Dendritic cell treated with granulocyte-macrophage colony-stimulating factor and Interleukin-4, amounts not matched to agents 40 ng/mL and 50 ng/mL, for 4 days (primary cell): ENCODE measurements at regions of chr1 and their contacts with region 1.

Region 1: DNA sequence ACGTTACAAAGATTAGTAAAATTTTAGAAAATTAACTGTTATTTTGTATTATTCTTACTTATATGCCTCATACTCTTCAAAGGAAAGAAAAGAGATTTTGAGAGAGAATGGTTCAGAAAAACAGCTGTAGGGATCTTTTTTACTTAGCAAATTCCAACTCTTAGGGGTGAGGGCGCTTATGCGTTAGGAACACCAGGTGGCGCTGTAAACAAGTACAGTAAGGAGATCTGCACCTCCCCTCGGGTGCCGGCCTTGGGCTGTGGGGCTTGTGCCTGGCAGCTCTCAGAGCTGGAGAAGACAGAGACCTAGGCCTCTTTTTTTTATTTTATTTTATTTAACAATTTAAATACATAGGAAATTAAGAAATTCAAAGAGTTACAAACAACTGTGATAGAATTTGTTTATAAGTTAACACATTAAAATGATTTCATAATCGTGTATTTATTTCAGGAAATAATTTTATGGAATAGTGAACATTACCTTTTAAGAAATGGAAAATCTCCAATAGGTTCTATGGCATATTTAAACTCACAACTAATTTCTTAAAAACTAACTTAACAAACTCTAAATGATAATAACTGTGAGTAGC is 32.6 kb downstream of the UTP25 start:
- H3K4me3 Mint-ChIP-seq: no peak overlapping the region
- H3K27ac Mint-ChIP-seq: no peak overlapping the region
- H3K4me1 Mint-ChIP-seq: peaks cover under 1% of the 10 kb centered on the region
- H3K27me3 Mint-ChIP-seq: peaks cover 11% of the 10 kb centered on the region

Region 2: GRCh38 chr1:209747580-209748262 is 112.7 kb before region 1 on chr1:
- intact Hi-C with region 1: no loop called
- H3K4me3 Mint-ChIP-seq: peak overlapping the region; percentile 80
- H3K27ac Mint-ChIP-seq: peak overlapping the region; percentile 77
- H3K4me1 Mint-ChIP-seq: peaks cover 73% of the 10 kb centered on the region
- H3K27me3 Mint-ChIP-seq: no peaks in the 10 kb centered on the region

Region 3: GRCh38 chr1:209784265-209785169 is 75.9 kb before region 1 on chr1 and contains the start of gene C1orf74:
- intact Hi-C with region 1: no loop called
- H3K4me3 Mint-ChIP-seq: peak within 1 kb of the TSS; percentile 97
- H3K27ac Mint-ChIP-seq: peak within 1 kb of the TSS; percentile 96
- H3K4me1 Mint-ChIP-seq: peaks cover 19% of the 10 kb centered on the region
- H3K27me3 Mint-ChIP-seq: peaks cover 15% of the 10 kb centered on the region

Region 4: DNA sequence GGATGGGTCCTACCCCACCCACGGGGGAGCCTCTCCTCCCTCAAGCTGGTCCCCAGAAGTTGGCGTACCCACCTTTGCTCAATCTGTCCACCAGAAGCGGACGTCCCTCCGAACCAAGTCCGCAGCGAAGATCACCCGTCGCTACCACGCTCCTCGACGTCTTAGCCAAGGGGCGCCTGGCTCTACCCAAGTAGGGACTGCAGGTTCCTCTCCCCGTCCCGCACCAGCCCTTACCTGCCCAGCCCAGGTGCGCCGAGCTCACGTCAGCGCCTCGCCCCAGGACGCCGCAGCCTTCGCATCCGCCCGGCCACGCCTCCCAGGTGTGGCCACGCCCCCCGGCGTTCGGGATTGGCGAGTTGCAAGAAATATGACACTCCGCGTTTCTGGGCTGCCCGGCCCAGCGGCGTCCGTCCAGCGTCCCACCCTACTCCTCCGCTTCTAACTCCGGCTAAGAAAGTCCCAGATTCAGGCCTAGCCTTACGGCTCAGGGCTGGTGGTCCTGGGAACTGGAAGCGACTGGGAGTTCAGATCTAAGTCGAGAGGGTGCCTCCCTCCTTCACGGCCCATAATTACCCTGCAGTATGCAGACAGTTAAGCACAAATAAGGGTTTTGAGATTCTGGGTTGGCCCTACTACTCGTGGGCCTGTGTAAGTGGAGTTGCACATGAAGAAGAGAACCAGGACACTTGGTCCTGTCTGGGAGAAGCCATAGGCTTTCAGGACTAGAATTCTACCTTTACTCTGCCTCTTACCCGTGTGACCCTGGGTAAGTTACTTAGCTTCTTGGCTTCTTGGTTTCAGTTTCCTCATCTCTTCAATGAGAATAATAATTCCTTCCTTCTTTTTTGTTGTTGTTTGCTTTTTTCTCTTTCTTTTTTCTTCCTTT is 54.3 kb before region 1 on chr1 and contains the start of gene IRF6:
- intact Hi-C with region 1: no loop called
- H3K4me3 Mint-ChIP-seq: peak within 1 kb of the TSS; percentile 73
- H3K27ac Mint-ChIP-seq: peak within 1 kb of the TSS; percentile 72
- H3K4me1 Mint-ChIP-seq: peaks cover 21% of the 10 kb centered on the region
- H3K27me3 Mint-ChIP-seq: peaks cover 37% of the 10 kb centered on the region

Region 5: GRCh38 chr1:209823143-209824041 is 37.0 kb before region 1 on chr1:
- intact Hi-C with region 1: no loop called
- H3K4me3 Mint-ChIP-seq: no peak overlapping the region
- H3K27ac Mint-ChIP-seq: no peak overlapping the region
- H3K4me1 Mint-ChIP-seq: peaks cover 6% of the 10 kb centered on the region
- H3K27me3 Mint-ChIP-seq: peaks cover 40% of the 10 kb centered on the region

Region 6: GRCh38 chr1:209989525-209989924 is 129.1 kb after region 1 on chr1:
- intact Hi-C with region 1: loop called (anchors 1 kb)
- H3K4me3 Mint-ChIP-seq: no peak overlapping the region
- H3K27ac Mint-ChIP-seq: no peak overlapping the region
- H3K4me1 Mint-ChIP-seq: no peaks in the 10 kb centered on the region
- H3K27me3 Mint-ChIP-seq: no peaks in the 10 kb centered on the region